Activated B cell treated with CpG ODN at 0.5 μM for 24 hours (primary cell): ENCODE measurements at regions of chr2 and their contacts with region 1.

Region 1: DNA sequence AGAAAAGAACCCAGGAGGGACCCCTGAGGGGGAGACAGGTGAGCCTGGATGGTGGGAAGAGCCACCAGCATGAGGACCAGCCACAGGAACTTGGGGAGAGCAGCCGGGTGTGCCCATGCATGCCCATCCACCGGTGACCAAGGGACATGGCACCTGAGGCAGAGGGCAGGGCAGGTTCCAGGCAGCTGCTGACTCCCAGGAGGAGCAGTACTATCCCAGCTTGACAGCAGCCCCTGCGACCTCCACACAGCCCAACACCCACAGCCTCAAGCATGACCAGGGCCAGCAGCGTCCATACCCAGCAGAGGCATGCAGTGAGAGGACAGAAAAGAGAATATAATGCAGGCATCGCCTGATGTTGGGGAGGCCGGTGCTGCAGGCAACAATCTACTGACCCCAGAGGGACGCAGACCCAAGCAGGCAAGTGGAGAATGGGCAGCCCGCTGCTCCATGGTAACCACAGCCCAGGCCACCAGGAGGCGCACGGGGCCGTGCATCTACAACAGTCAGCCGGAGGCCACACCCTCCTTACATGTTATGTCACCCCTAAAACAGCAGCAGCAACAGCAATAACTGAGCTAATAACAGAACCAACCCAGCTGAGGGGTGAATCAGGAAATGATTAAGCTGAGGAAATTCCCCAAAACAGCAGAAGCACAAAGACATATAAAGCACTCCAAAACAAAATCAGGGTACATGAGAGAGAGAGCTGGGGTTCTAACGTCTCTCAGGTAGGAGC is 44.1 kb downstream of the ANKMY1 start:
- DNase-seq: peak; percentile 71
- ATAC-seq: peak; percentile 99
- H3K4me3 Mint-ChIP-seq: peak overlapping the region; percentile 28
- H3K27ac Mint-ChIP-seq: peak overlapping the region; percentile 59
- H3K4me1 Mint-ChIP-seq: peaks cover 17% of the 10 kb centered on the region
- H3K27me3 Mint-ChIP-seq: no peaks in the 10 kb centered on the region
- CTCF ChIP-seq: peak; percentile 23

Region 2: DNA sequence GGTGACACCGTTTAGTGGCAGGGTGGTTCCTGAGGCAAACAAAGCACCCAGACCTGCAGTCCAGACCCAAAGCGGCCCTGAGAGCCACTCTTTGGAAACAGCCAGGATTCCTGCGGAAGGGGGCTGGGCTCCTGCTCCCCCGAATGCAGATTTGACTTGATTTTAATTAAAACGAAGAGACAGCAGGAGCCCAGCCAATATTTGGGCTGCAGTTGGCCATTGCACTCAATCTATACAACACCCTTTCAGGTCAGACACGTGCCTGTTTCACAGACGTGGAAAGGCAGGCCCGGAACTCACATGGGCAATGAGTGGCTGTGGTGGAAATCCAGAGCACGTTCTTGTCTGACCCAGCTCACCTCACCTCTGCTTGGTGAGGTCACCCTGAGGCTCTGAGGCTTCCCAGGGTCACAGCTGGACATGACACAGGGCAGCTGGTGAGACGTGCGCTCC is 610.9 kb before region 1 on chr2:
- CTCF ChIA-PET with region 1: no interaction called
- POLR2A ChIA-PET with region 1: no interaction called
- intact Hi-C with region 1: no loop called
- DNase-seq: no peak
- ATAC-seq: no peak
- H3K4me3 Mint-ChIP-seq: no peak overlapping the region
- H3K27ac Mint-ChIP-seq: no peak overlapping the region
- H3K4me1 Mint-ChIP-seq: no peaks in the 10 kb centered on the region
- H3K27me3 Mint-ChIP-seq: no peaks in the 10 kb centered on the region
- CTCF ChIP-seq: no peak

Region 3: GRCh38 chr2:240467394-240468302 is 46.1 kb before region 1 on chr2:
- CTCF ChIA-PET with region 1: no interaction called
- POLR2A ChIA-PET with region 1: no interaction called
- intact Hi-C with region 1: no loop called
- DNase-seq: no peak
- ATAC-seq: no peak
- H3K4me3 Mint-ChIP-seq: no peak overlapping the region
- H3K27ac Mint-ChIP-seq: no peak overlapping the region
- H3K4me1 Mint-ChIP-seq: peaks cover 2% of the 10 kb centered on the region
- H3K27me3 Mint-ChIP-seq: no peaks in the 10 kb centered on the region
- CTCF ChIP-seq: no peak

Region 4: DNA sequence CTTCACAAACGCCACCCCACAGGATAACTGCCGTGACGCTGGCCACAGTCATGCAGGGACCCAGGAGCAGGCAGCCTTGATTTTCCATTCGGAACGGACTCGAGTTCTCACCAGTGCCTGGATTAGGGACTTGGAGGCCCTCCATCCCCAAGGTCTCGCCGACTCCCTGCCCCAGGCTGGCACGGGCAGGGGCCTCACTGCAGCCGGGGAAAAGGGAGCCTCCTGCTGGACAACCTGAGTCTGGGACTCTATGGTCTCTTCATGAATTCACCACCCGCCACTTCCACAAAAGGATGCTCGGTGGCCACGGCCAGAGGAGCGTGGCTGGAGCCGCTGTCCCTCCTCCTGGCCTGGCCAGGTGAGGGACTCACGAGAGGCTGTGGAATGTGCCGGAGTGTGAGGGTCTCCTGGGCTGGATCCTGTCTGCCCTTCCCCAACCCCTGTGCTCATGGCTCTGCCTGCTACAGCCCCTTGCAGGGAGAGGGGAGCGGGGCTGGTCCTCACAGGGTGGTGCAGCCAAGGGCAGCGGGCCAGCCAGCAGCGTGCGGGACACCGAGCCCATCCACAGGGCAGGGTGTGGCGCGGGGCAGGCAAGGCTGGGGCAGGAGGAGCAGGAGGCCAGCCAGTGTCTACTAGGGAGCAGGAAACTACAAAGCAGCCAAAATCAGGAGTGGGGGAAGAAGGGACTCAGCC is 220.2 kb after region 1 on chr2:
- CTCF ChIA-PET with region 1: interaction called, 4 read pairs
- POLR2A ChIA-PET with region 1: no interaction called
- intact Hi-C with region 1: loop called (anchors 1 kb)
- DNase-seq: no peak
- ATAC-seq: peak; percentile 28
- H3K4me3 Mint-ChIP-seq: no peak overlapping the region
- H3K27ac Mint-ChIP-seq: no peak overlapping the region
- H3K4me1 Mint-ChIP-seq: no peaks in the 10 kb centered on the region
- H3K27me3 Mint-ChIP-seq: peaks cover 3% of the 10 kb centered on the region
- CTCF ChIP-seq: no peak

Region 5: GRCh38 chr2:240840435-240841080 is 326.8 kb after region 1 on chr2:
- CTCF ChIA-PET with region 1: interaction called, 13 read pairs
- POLR2A ChIA-PET with region 1: no interaction called
- intact Hi-C with region 1: no loop called
- DNase-seq: no peak
- ATAC-seq: peak; percentile 21
- H3K4me3 Mint-ChIP-seq: no peak overlapping the region
- H3K27ac Mint-ChIP-seq: no peak overlapping the region
- H3K4me1 Mint-ChIP-seq: no peaks in the 10 kb centered on the region
- H3K27me3 Mint-ChIP-seq: peaks cover 12% of the 10 kb centered on the region
- CTCF ChIP-seq: no peak